Posterior cingulate gyrus (tissue), 11 donors: ENCODE measurements at regions of chr6 and their contacts with region 1.

Region 1: GRCh38 chr6:6547110-6547879 is 41.2 kb upstream of the LY86 start:
- DNase-seq: peak; percentile 83 to 98 (median 95)

Region 2: DNA sequence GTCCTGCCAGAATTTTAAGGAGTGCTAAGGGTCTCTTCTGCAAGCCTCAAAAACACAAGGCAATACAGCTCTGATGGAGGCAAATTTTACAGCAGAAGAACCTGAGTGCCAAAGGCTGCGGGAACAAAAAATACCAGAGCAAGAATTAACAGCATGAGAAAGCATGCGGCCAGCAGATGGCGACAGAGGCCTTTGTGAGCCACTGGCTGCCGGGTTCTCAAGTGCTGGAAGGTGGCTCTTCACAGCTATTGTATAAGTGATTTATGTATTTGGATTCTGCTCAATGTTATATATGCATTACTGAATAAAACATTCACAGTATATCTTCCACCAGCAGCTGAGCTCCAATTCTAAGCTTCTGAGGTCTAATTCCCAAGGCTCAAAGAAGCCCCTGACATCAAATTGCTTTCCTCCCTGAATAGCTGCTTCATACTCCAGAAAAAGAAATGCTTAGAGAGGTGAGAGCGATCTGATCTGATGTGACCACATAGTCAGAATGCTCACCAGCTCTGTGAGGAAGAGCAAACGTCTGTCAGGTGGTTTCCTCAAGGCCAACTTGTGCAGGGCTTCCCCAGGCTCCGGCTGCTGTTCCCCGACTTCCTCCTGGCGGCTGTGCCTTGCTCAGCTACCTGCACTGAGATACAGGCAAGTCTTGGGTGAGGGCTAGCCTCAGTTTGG is 1403.5 kb before region 1 on chr6:
- intact Hi-C with region 1: loop called (anchors 1 kb)
- DNase-seq: peak; percentile 76 to 98 (median 93)

Region 3: DNA sequence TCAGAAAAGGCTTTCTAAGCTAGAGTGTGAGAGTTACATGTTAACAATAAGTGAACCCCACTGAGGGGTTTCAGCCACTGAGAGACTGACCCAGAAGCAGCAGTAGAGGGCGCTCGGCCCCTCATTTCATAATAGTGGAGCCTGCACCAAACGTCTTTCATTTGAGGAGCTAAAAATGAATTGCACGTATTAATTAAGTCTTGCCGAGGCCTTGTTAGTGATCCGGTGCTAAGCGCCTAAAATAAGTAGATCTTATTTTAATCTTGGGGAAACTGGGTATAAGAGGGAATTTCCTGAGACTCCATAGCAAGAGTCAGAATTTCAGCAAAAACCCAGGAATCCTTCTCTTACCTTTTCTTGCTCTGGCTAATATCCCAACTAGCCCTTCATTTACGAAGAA is 1076.3 kb before region 1 on chr6:
- intact Hi-C with region 1: loop called (anchors 5 kb)
- DNase-seq: peak; percentile 39 to 94 (median 73)

Region 4: DNA sequence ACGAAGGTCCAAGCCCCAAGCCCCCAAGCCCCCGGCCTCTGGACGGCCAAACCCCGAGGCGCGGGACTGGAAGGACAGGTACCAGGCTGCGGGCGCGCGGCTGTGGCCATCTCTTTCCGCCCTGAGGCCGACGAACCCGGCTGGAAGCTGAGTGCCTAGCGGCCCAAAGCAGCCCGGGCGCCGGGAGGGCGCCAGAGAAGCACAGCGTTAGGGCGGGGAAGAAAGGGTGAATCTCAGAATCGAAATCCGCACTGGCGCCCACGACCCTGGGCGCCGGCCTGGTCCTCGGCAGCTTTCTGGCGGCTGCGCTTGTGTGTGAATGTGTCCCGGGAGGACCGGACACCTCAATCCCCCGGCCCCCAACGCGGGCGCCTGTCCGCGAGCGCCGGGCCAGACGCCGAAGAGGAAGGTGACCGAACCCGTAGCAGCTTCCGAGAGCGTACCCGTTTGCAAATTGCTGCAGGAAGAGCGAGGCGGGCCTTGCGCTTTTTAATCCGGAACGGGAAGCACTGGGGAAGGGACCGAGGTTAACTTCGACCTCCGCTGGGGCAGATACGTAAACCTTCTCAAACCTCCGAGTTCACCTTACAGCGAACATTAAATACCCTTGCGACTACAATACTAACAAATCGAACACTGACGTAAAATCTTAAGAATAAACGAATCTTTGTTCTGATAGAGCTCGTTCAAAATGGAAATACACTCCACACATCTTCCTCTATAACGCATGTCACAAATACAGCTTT is 543.5 kb before region 1 on chr6:
- intact Hi-C with region 1: loop called (anchors 5 kb)
- DNase-seq: peak in 4 of 10 donors; percentile 21 to 89 (median 50)

Region 5: DNA sequence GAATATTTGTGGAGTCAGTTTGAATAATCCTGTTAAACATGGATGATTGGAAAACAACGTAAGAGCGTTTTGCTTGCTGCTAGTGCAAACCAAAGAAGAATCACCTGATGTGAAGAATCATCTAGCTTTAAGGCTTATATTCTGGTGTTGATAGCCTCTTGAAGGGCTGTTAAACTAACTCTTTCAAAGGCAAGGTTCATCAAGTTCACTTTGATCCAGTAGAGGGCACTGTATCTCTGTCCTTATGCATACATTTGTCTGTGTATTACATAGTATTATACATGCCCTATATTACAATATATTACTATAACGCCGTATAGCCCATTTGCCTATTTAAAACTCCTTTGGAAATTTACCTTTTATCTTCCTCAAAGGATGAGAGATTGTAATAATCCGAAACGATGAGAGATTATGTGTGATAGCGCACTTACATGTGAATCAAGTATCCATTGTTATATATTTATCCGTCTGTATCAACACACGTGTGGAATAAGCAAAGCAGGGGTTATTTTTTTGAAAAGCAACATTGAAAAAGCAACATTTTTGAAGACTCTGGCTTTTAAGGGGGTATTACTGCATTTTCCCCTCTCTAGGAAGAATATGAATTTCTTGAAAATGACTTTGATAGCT is 489.8 kb before region 1 on chr6:
- intact Hi-C with region 1: loop called (anchors 2 kb)
- DNase-seq: no peak

Region 6: DNA sequence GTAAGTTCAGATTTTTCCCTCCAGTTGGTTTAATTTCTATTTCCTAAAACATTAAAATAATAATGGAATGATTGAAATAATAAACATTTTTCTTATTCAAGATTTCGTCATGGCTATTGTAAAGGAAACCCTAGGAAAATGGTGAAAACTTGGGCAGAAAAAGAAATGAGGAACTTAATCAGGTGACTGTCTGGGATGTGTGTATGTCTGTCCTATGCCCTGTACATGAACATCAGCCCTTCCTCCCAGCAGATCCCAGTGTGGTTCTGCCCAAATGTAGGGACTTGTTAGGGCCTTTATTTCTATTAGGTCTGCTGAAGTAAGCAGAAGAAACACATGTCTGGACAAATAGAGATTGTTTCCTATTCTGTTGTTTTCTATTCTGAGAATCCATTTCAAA is 855.4 kb after region 1 on chr6:
- intact Hi-C with region 1: no loop called
- DNase-seq: no peak